WTC11 (cell line): ENCODE measurements at regions of chr20 and their contacts with region 1.

Region 1: GRCh38 chr20:20843982-20844381 is 131.5 kb upstream of the RALGAPA2 start:
- DNase-seq: peak; percentile 58
- ATAC-seq: peak; percentile 98
- H3K4me3 Mint-ChIP-seq: no peak overlapping the region
- H3K27ac Mint-ChIP-seq: no peak overlapping the region
- H3K4me1 Mint-ChIP-seq: no peaks in the 10 kb centered on the region
- H3K27me3 Mint-ChIP-seq: no peaks in the 10 kb centered on the region; the same call in none of the 2 replicates
- CTCF ChIP-seq: no peak

Region 2: GRCh38 chr20:20860078-20860806 is 16.3 kb after region 1 on chr20:
- CTCF ChIA-PET with region 1: interaction called, 48 read pairs
- POLR2A ChIA-PET with region 1: no interaction called
- DNase-seq: peak; percentile 99
- ATAC-seq: peak; percentile 81
- H3K4me3 Mint-ChIP-seq: no peak overlapping the region
- H3K27ac Mint-ChIP-seq: no peak overlapping the region
- H3K4me1 Mint-ChIP-seq: no peaks in the 10 kb centered on the region; the same call in 1 of the 2 replicates
- H3K27me3 Mint-ChIP-seq: peaks cover 4% of the 10 kb centered on the region
- CTCF ChIP-seq: peak; percentile 80